ENCODE measurements at regions of chr18 and their contacts with region 1.

Region 1: DNA sequence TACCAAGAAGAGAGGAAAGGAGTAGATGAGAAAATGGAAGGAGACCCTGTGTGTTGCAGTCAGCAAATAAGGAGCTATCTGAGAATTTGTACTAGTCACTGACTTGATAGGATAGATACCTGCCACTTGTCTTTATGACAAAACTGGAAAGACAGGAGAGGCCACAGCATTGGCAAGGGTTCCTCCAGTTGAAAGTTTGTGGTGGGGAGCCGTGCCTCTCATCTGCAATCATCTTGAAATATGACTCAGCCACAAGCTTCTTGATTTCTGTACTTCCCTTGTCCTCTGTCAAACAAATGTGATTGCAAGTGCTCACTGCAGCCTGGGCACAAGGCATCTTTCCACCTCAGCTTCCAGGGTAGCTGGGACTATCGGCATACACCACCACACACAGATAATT is 99.1 kb downstream of the GREB1L start:
- DNase-seq: no peak
- ATAC-seq: no peak
- H3K4me3 ChIP-seq: no peak overlapping the region
- H3K27ac ChIP-seq: no peak overlapping the region
- H3K4me1 ChIP-seq: peaks cover 2% of the 10 kb centered on the region
- H3K27me3 ChIP-seq: no peaks in the 10 kb centered on the region

Region 2: DNA sequence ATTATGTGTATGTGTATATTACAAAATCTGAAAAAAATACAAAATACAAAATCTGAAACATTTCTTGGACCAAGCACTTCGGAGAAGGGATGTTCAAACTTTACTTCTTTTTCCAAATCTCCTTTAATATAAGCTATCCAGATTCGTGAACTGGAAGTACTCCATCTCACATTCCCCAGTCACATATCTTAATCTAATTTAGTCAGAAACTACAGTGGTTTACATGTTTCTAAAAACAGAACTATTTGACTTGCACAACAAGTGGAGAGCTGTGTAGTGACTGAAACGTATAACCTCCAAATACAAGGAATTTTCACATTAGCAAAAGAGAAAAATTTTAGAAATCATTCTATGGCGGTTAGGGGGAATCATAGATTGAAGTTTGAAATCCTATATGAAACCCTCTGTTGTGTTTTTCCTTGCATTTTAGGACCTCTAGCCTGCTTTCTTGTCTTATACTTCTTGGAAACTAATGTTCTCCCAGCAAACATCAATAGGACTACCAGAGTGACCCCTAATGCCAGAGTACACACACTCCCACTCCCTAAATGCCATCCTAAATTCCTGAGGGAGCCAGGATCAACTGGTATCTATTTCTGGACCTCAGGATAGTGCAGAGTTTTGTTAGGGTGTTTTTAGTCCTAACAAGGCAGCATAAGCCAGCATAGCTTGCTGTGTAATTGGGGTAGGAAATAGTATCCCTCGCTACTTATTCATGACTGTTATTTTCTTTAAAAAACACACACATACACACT is 199.3 kb before region 1 on chr18:
- intact Hi-C with region 1: no loop called
- DNase-seq: no peak
- ATAC-seq: peak in 1 of 2 donors; percentile 40
- H3K4me3 ChIP-seq: no peak overlapping the region
- H3K27ac ChIP-seq: no peak overlapping the region
- H3K4me1 ChIP-seq: peaks cover 1% of the 10 kb centered on the region
- H3K27me3 ChIP-seq: no peaks in the 10 kb centered on the region

Region 3: GRCh38 chr18:21281611-21282010 is 59.5 kb before region 1 on chr18:
- intact Hi-C with region 1: no loop called
- DNase-seq: no peak
- ATAC-seq: no peak
- H3K4me3 ChIP-seq: no peak overlapping the region
- H3K27ac ChIP-seq: no peak overlapping the region
- H3K4me1 ChIP-seq: no peaks in the 10 kb centered on the region
- H3K27me3 ChIP-seq: no peaks in the 10 kb centered on the region

Region 4: DNA sequence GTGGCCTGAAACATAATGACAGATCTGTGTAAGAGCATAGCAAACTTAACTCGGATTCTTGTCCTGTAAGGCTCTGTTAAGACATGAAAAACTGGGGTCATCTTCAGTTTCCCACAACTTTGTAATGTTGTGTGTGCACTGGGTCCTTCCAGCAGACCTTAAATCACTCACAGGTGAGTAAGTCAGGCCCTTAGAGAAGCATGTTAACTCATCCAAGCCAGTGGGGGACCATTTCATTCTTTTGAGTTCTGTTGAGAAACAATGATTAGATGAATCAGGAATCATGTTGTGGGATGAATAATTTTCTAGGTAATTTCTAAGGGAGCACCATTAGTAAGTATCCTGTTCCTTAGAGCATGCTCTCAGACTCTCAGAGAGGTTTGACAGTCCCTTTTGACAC is 92.3 kb after region 1 on chr18:
- intact Hi-C with region 1: loop called in 1 of 4 experiments (anchors 10 kb)
- DNase-seq: no peak
- ATAC-seq: no peak
- H3K4me3 ChIP-seq: no peak overlapping the region
- H3K27ac ChIP-seq: no peak overlapping the region
- H3K4me1 ChIP-seq: no peaks in the 10 kb centered on the region
- H3K27me3 ChIP-seq: no peaks in the 10 kb centered on the region

Region 5: DNA sequence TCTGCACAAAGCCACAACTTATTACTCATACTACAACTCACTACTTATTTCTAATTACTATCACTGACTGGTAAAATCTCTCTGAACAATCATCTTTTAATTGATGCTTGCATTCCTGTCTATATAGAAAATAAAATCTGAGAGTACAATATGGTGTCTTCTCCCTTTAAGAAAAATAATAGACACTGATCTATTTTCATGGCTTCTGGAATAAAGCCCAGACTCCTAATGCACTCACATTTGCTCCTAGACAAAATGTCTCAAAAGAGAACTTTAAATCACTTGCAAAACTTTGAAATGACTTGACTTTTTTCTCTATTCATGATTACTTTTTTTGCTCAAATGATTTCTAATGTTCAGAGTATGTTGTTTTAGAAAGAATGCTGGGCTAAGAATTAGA is 230.6 kb after region 1 on chr18:
- intact Hi-C with region 1: no loop called
- DNase-seq: no peak
- ATAC-seq: no peak
- H3K4me3 ChIP-seq: no peak overlapping the region
- H3K27ac ChIP-seq: no peak overlapping the region
- H3K4me1 ChIP-seq: no peaks in the 10 kb centered on the region
- H3K27me3 ChIP-seq: no peaks in the 10 kb centered on the region